ENCODE measurements at regions of chr19 and their contacts with region 1.

Region 1: GRCh38 chr19:20661150-20661819 is at the start of gene ZNF626:
- DNase-seq: peak; percentile 95
- ATAC-seq: peak; percentile 99
- total RNA-seq, gene ZNF626: 7.5 TPM

Region 2: GRCh38 chr19:20482721-20483120 is 178.6 kb before region 1 on chr19:
- intact Hi-C with region 1: no loop called
- DNase-seq: no peak
- ATAC-seq: no peak

Region 3: DNA sequence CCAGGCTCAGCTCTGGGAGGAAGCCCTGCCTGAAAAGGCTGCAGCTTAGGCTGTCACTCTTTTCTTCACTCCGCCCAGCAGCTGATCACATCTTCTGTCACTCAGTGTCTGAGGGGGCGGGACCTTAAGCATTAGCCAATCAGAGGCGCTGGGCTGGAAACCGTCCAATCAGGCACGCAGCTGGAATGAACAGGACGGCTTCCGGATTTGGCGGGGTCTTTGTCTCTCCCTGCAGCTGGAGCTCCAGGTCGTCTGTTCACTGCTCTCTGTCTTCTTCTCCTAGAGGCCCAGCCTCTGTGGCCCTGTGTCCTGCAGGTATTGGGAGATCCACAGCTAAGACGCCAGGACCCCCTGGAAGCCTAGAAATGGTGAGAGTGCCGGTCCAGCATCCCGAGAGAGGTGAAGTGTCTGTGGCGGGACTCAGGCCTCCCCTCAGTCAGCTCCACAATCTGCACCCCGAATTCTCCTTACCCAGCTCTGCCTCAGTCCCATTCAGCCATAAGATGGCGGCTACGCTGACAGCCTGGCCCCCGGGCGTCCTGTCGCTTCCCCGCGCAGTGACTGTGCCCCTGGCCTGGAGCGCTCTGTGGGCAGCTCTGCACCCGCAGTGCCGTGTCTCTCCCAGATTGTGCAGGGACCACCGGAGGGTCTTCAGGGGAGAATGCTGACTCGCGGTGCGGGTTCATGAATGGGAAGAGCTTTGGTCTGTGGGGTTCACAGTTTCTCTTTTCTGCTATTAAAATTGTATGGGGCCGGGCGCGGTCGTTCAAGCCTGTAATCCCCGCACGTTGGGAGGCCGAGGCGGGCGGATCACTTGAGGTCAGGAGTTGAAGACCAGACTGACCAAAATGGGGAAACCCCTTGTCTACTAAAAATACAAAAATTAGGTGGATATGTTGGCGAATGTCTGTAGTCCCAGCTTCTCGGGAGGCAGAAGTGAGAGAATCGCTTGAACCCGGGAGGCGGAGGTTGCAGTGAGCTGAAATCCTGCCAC is 115.1 kb after region 1 on chr19 and contains the start of gene ZNF66:
- intact Hi-C with region 1: loop called (anchors 5 kb)
- DNase-seq: peak; percentile 95
- ATAC-seq: peak; percentile 100
- total RNA-seq, gene ZNF66: 1.4 TPM

Measured in Right ventricle myocardium inferior (tissue), 1 donor.